SK-N-SH (cell line): ENCODE measurements at regions of chr16 and their contacts with region 1.

Region 1: DNA sequence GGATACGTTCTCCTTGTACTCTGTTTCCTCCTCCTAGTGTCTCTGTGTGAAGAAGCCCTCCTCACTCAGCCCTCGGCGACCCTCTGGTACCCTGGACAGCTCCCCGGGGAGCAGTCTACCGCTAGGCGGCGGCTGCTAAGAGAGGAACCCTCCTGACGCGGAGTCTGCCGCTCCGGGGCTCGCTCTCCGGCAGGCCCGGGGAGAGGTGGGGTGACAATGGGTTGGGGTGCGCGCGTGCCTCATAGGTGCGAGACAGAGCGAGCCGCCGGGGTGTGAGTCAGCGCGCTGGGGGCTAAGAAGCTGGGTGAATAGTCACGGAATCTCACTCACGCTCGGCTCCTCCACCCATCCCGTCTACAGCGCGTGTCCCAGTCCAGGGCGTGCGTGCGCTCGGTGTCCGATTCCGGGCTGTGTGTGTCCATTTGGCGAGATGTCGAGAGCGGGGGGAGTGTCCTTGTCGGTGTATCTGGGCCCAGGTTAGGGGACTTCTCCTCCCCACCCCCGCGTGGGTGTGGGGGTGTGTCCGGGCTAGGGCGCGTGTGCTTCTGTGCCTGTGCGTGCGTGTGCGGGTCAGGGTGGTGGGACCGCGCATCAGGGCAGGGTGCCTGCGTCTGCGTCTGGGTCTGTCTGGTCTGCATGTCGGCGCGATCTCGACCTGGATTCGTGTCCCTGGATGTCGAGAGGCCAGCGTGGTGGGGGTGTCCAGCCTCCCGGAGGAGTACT is 578 bp upstream of the HS3ST2 start:
- DNase-seq: peak; percentile 84
- H3K4me3 ChIP-seq: peak overlapping the region in 1 of 2 experiments; percentile 33; a peak in 3 of 4 replicates
- H3K27ac ChIP-seq: no peak overlapping the region; a peak in 1 of 4 replicates
- H3K4me1 ChIP-seq: peaks cover 0 to 6% of the 10 kb centered on the region in 2 experiments; a peak in 1 of 4 replicates
- H3K27me3 ChIP-seq: peaks cover 10% of the 10 kb centered on the region; the same call in 1 of the 2 replicates
- CTCF ChIP-seq: peak; percentile 74
- EP300 ChIP-seq: no peak
- RAD21 ChIP-seq: peak; percentile 59

Region 2: GRCh38 chr16:22694887-22695382 is 118.4 kb before region 1 on chr16:
- CTCF ChIA-PET with region 1: interaction called, 14 read pairs
- POLR2A ChIA-PET with region 1: no interaction called
- DNase-seq: no peak
- H3K4me3 ChIP-seq: no peak overlapping the region
- H3K27ac ChIP-seq: no peak overlapping the region
- H3K4me1 ChIP-seq: no peaks in the 10 kb centered on the region
- H3K27me3 ChIP-seq: no peaks in the 10 kb centered on the region
- CTCF ChIP-seq: no peak
- EP300 ChIP-seq: no peak
- RAD21 ChIP-seq: no peak

Region 3: GRCh38 chr16:22705799-22706198 is 107.6 kb before region 1 on chr16:
- CTCF ChIA-PET with region 1: no interaction called
- POLR2A ChIA-PET with region 1: no interaction called
- DNase-seq: no peak
- H3K4me3 ChIP-seq: no peak overlapping the region
- H3K27ac ChIP-seq: no peak overlapping the region
- H3K4me1 ChIP-seq: peaks cover 0 to 3% of the 10 kb centered on the region in 2 experiments; a peak in 1 of 4 replicates
- H3K27me3 ChIP-seq: no peaks in the 10 kb centered on the region
- CTCF ChIP-seq: no peak
- EP300 ChIP-seq: no peak
- RAD21 ChIP-seq: no peak

Region 4: DNA sequence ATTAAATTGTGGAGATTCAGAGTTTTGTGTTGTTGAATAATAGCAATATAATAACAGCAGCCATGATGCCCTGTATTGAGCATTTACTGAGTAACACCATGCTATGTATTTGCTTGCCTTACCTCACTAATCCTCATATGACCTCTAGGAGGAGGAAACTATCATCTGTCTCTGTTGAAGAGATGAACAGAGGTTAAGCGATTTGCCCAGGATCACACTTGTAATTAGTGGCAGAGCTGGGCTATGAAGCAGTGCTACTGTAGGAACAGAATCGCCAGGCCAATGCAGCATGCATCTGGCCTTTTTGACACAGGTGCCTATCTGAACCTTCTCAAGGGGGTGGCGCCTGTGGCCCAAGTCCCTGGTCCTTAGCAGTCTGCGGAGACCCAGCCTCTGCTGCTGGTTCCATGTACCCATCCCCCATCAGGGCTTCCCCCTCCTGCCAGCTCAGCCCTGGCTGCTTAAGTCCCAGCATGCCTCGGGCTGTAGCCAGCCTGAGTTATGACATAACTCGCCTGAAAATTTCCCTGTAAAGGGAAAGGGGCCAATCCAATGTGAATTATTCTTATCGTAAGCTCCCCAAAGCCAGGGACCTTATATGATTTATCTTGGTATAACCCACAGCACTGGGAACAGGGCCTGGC is 49.8 kb before region 1 on chr16:
- CTCF ChIA-PET with region 1: interaction called, 18 read pairs
- POLR2A ChIA-PET with region 1: no interaction called
- DNase-seq: peak; percentile 63
- H3K4me3 ChIP-seq: no peak overlapping the region
- H3K27ac ChIP-seq: peak overlapping the region in 1 of 2 experiments; percentile 85; a peak in 2 of 4 replicates
- H3K4me1 ChIP-seq: peaks cover 0 to 32% of the 10 kb centered on the region in 2 experiments; a peak in 2 of 4 replicates
- H3K27me3 ChIP-seq: no peaks in the 10 kb centered on the region
- CTCF ChIP-seq: no peak
- EP300 ChIP-seq: no peak
- RAD21 ChIP-seq: no peak; the same call in none of the 2 replicates

Region 5: DNA sequence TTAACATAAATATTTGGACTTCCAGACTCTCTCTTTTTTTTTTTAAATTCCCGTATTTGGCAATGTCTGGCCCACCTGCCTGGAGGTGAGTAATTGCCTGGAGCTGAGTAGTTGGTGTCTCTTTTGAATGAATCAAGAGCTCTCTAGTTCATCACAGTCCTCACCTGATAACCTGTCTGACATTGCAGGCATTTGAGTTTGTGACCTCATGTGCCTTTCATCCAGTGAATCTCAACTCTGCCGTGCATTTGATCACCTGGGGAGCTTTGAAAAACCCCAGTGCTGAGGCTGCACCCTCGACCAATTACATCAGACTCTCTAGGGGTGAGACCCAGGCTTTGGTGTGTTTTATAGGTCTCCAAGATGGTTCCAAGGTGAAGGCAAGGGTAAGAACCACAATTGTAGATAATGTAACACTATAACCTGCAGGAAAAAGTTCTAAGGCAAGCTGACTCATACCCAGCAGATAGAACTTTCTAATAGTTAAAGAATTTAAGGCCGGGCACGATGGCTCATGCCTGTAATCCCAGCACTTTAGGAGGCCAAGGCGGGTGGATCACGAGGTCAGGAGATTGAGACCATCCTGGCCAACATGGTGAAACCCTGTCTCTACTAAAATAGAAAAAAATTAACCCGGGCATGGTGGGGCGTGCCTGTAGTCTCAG is 24.0 kb before region 1 on chr16:
- CTCF ChIA-PET with region 1: interaction called, 15 read pairs
- POLR2A ChIA-PET with region 1: no interaction called
- DNase-seq: no peak
- H3K4me3 ChIP-seq: no peak overlapping the region
- H3K27ac ChIP-seq: no peak overlapping the region; a peak in 1 of 4 replicates
- H3K4me1 ChIP-seq: peaks cover 0 to 18% of the 10 kb centered on the region in 2 experiments
- H3K27me3 ChIP-seq: no peaks in the 10 kb centered on the region
- CTCF ChIP-seq: no peak
- EP300 ChIP-seq: no peak
- RAD21 ChIP-seq: no peak

Region 6: DNA sequence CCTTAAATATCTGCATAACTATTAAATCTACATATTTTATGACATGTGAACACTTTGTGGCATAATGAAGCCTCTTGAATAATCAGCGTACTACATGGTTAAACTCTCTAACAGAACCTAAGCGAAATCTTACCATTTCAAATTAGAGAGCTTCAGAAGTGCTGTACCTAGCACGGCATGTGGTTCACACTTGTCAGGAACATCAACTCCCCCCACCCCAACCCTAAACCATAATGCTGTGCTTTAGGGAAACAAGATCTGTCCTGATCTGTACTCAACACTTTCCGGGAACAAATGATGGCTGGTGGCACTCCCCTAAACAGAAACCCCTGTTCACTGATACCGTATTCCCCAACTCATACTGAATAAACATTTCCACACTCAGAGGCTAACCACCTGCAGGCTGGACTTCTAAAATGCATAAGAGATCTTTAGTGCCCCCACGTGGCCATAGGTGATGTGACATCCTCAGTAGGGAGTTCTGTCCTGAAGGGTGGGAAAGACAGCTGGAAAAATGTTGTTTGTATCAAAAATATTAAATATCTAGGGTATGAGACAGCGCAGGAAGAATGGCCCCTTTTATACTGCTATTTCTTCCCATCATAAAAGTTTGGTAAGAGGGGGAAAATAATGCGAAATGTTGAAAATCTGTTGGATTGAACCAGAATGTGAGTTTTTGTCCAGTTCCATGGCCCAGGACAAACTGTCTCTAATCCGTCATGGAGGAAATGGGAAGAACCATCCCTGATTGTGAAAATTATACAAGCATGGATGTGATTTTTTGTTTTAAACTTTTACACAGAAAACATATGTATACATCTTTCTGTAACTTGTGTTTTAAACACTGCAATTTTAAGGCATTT is 247.3 kb after region 1 on chr16:
- CTCF ChIA-PET with region 1: interaction called, 16 read pairs
- POLR2A ChIA-PET with region 1: no interaction called
- DNase-seq: peak; percentile 75
- H3K4me3 ChIP-seq: no peak overlapping the region; a peak in 1 of 4 replicates
- H3K27ac ChIP-seq: no peak overlapping the region
- H3K4me1 ChIP-seq: peaks cover 0 to 2% of the 10 kb centered on the region in 2 experiments; a peak in 1 of 4 replicates
- H3K27me3 ChIP-seq: no peaks in the 10 kb centered on the region
- CTCF ChIP-seq: peak; percentile 85
- EP300 ChIP-seq: no peak
- RAD21 ChIP-seq: peak; percentile 92